Mammary epithelial cell (primary cell): ENCODE measurements at regions of chr11 and their contacts with region 1.

Region 1: GRCh38 chr11:6353367-6353987 is 33.2 kb upstream of the CAVIN3 start:
- DNase-seq: peak; percentile 68
- H3K4me3 ChIP-seq: no peak overlapping the region
- H3K27ac ChIP-seq: no peak overlapping the region
- H3K4me1 ChIP-seq: peaks cover 11% of the 10 kb centered on the region
- H3K27me3 ChIP-seq: no peaks in the 10 kb centered on the region
- CTCF ChIP-seq: peak; percentile 85 to 98

Region 2: GRCh38 chr11:5891216-5891800 is 462.2 kb before region 1 on chr11:
- CTCF ChIA-PET with region 1: no interaction called
- dilution Hi-C with region 1: no loop called
- in situ Hi-C with region 1: no loop called
- intact Hi-C with region 1: loop called (anchors 5 kb)
- DNase-seq: peak; percentile 6
- H3K4me3 ChIP-seq: no peak overlapping the region
- H3K27ac ChIP-seq: no peak overlapping the region
- H3K4me1 ChIP-seq: no peaks in the 10 kb centered on the region
- H3K27me3 ChIP-seq: no peaks in the 10 kb centered on the region
- CTCF ChIP-seq: peak; percentile 24 to 45

Region 3: DNA sequence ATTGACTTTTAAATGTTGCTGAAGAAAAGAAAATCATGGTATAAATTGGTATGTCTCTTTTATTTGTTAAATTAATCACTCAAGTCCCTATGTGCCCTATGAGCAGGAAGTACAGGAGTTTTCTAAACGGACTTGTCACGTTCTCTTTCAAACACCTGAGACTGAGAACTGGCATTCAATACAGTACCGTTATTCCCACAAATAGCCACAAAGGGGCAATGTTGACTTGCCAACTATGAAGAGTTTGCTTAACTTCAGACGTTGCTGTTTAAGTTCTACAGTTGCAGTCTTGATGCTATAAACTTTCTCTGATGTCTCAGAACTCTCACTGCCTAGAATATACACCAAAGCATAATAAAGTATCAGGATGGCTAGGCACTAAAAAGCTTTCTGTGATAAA is 330.5 kb before region 1 on chr11:
- CTCF ChIA-PET with region 1: no interaction called
- dilution Hi-C with region 1: no loop called
- in situ Hi-C with region 1: loop called (anchors 5 to 10 kb)
- intact Hi-C with region 1: loop called (anchors 1 kb)
- DNase-seq: peak; percentile 40
- H3K4me3 ChIP-seq: no peak overlapping the region
- H3K27ac ChIP-seq: no peak overlapping the region
- H3K4me1 ChIP-seq: no peaks in the 10 kb centered on the region
- H3K27me3 ChIP-seq: no peaks in the 10 kb centered on the region
- CTCF ChIP-seq: peak; percentile 50 to 73

Region 4: DNA sequence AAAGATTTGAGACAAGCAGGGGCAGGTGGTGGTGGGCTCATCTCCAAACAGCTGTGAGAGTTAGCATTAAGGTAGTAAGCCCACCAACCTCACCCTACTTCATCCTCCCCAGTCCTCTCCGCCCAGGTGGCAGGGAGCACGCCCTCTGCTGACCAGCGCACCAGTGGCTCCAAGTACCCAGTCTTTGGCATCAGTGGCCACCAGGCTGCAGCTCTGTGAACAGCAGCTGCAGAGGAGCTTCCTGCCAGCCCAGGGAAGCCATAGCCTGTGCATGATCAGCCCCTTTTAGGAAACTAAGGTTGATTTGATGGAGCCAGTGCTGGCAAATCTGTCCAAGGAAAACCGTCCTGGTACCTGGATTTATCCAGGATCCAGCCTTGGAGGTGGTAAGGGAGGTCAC is 54.9 kb before region 1 on chr11:
- CTCF ChIA-PET with region 1: interaction called, 11 read pairs
- dilution Hi-C with region 1: no loop called
- in situ Hi-C with region 1: no loop called
- intact Hi-C with region 1: loop called (anchors 1 kb)
- DNase-seq: peak; percentile 28
- H3K4me3 ChIP-seq: no peak overlapping the region
- H3K27ac ChIP-seq: no peak overlapping the region
- H3K4me1 ChIP-seq: no peaks in the 10 kb centered on the region
- H3K27me3 ChIP-seq: no peaks in the 10 kb centered on the region
- CTCF ChIP-seq: peak; percentile 59 to 97

Region 5: DNA sequence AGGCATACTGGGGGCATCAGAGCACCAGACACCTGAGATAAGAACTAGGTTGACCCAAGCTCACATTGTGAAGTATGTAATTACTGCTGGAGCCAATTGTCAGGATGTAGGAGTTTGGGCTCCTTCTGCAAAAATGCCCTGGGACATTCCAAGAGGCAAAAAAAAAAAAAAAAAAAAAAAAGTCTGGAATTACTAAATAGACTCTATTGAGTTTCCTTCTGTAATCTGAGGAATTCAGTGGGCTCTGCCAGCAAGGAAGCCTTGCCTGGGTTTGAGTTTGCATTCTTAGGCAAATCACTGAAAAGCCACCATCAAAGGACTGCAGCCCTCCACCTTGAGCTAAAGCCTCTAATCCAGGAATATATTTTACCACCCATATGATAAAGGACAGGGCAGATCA is 25.2 kb before region 1 on chr11:
- CTCF ChIA-PET with region 1: no interaction called
- dilution Hi-C with region 1: no loop called
- in situ Hi-C with region 1: no loop called
- intact Hi-C with region 1: no loop called
- DNase-seq: no peak
- H3K4me3 ChIP-seq: no peak overlapping the region
- H3K27ac ChIP-seq: no peak overlapping the region
- H3K4me1 ChIP-seq: peaks cover 2% of the 10 kb centered on the region
- H3K27me3 ChIP-seq: no peaks in the 10 kb centered on the region
- CTCF ChIP-seq: no peak

Region 6: DNA sequence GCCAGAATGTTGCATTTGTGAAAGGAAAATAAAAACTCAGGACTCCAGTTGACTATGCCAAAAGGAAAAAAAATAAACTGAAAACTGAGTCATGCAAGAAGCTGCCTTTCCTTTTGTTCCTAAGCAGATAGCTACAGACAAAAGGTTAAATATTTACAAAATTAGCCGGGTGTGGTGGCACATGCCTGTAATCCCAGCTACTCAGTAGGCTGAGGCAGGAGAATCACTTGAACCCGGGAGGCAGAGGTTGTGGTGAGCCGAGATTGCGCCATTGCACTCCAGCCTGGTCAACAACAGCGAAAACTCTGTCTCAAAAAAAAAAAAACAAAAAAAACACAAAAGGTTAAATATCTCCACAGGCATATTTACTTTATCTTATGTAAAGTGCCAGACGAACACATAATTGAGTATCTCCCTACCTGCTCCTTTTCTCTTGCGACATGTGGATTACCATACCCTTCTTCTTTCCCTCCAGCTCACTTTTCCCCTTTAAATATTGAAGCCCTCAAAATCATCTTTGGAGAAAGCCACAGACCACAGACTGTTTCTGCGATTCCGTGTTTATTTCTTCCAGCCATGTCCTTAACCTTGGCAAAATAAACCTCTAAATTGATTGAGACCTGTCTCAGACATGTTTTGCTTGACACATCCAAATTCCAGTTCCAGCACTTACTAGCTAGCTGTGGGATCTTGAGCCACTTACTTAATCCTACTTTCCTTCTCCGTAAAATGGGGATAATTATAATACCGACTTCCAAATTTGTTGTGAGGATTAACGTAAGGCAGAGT is 34.5 kb after region 1 on chr11:
- CTCF ChIA-PET with region 1: no interaction called
- dilution Hi-C with region 1: no loop called
- in situ Hi-C with region 1: no loop called
- intact Hi-C with region 1: no loop called
- DNase-seq: no peak
- H3K4me3 ChIP-seq: no peak overlapping the region
- H3K27ac ChIP-seq: no peak overlapping the region
- H3K4me1 ChIP-seq: peaks cover 21% of the 10 kb centered on the region
- H3K27me3 ChIP-seq: no peaks in the 10 kb centered on the region
- CTCF ChIP-seq: no peak